ENCODE measurements at regions of chr17 and their contacts with region 1.

Region 1: DNA sequence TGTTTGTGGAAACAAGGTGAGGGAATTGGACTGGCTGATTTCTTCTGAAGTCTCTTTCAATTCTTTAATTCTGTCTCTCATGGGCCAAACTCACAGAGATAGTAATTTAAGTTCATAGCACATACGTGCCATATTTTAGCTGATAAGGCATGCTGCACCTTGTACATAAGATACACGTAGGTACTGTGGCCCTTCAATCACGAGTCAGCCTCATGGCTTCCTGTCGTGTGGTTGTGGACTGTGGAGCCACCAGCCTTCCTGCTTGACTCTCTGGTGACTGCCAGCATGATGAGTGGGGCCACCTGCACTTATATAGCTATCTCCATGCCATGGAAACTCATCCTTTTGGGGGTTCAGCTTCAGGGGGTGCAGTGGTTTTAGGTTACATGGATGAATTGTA is 25.1 kb downstream of the KSR1 start:
- DNase-seq: peak in 6 of 9 donors; percentile 37 to 52 (median 47)
- ATAC-seq: peak; percentile 91
- H3K4me3 ChIP-seq: no peak overlapping the region
- H3K4me3 Mint-ChIP-seq: peak overlapping the region in 6 of 10 donors; percentile 12 to 79 (median 39)
- H3K27ac ChIP-seq: no peak overlapping the region
- H3K27ac Mint-ChIP-seq: peak overlapping the region in 7 of 9 donors; percentile 27 to 96 (median 63)
- H3K4me1 ChIP-seq: peaks cover 10 to 16% of the 10 kb centered on the region in 2 donors
- H3K4me1 Mint-ChIP-seq: peaks cover 21 to 87% (median 46%) of the 10 kb centered on the region in 7 donors
- H3K27me3 ChIP-seq: no peaks in the 10 kb centered on the region
- H3K27me3 Mint-ChIP-seq: no peaks in the 10 kb centered on the region

Region 2: DNA sequence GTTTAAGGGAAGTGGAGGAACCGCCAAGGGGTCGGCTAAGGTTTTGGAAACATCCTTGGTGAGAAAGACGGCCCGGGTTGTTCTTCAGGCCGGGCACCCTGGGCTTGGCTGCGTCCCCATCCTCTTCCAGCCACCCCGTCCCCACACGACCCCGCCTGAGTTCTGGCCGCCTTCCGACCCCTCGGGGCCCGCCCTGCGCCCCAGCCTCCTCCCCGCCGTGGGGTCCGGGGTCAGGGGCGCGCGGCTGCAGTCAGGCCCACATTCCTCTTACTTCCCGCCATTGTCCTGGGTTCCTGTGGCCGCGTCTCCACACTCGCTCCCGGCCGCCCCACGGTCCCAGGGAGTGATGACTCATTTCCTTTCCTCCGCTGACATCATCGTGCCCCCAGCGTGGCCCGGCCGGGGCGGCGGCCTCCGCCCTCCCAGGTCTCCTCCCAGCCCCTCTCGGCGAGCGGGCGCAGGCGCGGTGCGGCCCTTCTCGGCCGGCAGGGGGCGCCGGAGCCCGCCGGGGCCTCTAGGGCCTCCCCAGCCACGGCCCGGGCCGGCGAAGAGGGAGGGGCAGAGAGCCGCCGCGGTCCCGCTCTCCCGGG is 127.8 kb before region 1 on chr17:
- CTCF ChIA-PET with region 1: no interaction called
- POLR2A ChIA-PET with region 1: no interaction called
- intact Hi-C with region 1: no loop called
- DNase-seq: peak; percentile 68 to 95 (median 77)
- ATAC-seq: peak; percentile 96
- H3K4me3 ChIP-seq: peak overlapping the region; percentile 85
- H3K4me3 Mint-ChIP-seq: peak overlapping the region; percentile 30 to 93 (median 78)
- H3K27ac ChIP-seq: peak overlapping the region; percentile 83
- H3K27ac Mint-ChIP-seq: peak overlapping the region; percentile 46 to 94 (median 79)
- H3K4me1 ChIP-seq: peaks cover 3 to 12% of the 10 kb centered on the region in 2 donors
- H3K4me1 Mint-ChIP-seq: peaks cover 12 to 31% (median 21%) of the 10 kb centered on the region in 7 donors
- H3K27me3 ChIP-seq: no peaks in the 10 kb centered on the region
- H3K27me3 Mint-ChIP-seq: no peaks in the 10 kb centered on the region

Region 3: DNA sequence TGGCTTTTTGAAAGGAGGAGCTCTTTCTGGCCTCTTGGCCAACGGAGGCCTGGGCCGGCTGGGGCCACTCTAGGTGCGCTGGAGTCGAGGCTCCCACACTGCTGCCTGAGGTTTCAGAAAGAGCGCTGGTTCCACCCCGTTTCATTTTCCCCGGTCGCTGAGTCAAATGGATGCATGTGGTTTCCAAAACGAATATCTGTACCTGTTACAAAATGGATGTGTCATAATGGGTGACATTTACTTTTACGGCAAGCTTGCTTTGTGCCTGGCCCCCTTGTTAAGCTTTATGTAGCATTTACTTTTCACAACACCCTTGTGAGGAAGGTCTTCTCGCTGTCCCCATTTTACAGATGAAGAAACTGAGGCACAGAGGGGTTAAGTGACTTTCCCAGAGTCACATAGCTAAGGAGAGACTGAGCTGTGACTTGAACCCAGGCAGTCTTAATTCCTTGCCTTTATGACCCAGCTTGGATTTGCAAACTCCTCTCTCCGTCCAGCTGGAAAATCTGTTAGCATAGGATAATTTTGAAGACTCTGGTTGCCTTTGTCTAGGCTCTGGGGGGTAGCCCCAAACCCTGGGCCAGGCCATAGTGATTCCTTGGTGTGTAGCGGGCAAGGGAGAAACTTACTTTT is 14.5 kb before region 1 on chr17:
- CTCF ChIA-PET with region 1: no interaction called
- POLR2A ChIA-PET with region 1: no interaction called
- intact Hi-C with region 1: loop called in 1 of 2 experiments (anchors 2 kb)
- DNase-seq: peak in 2 of 9 donors; percentile 7 to 76
- ATAC-seq: peak; percentile 80
- H3K4me3 ChIP-seq: peak overlapping the region; percentile 31
- H3K4me3 Mint-ChIP-seq: peak overlapping the region in 9 of 10 donors; percentile 32 to 86 (median 53)
- H3K27ac ChIP-seq: no peak overlapping the region
- H3K27ac Mint-ChIP-seq: peak overlapping the region in 4 of 9 donors; percentile 36 to 97 (median 71)
- H3K4me1 ChIP-seq: peaks cover 0 to 25% of the 10 kb centered on the region in 2 donors
- H3K4me1 Mint-ChIP-seq: peaks cover 28 to 88% (median 34%) of the 10 kb centered on the region in 7 donors
- H3K27me3 ChIP-seq: no peaks in the 10 kb centered on the region
- H3K27me3 Mint-ChIP-seq: no peaks in the 10 kb centered on the region